Gastrocnemius medialis (tissue), 4 donors: ENCODE measurements at regions of chr6 and their contacts with region 1.

Region 1: GRCh38 chr6:137707590-137708360 is 159.3 kb upstream of the TNFAIP3 start:
- DNase-seq: peak; percentile 45 to 69
- ATAC-seq: peak; percentile 81 to 89
- H3K4me3 ChIP-seq: peak overlapping the region in 1 of 4 donors; percentile 2
- H3K27ac ChIP-seq: no peak overlapping the region
- H3K4me1 ChIP-seq: peaks cover 9 to 11% of the 10 kb centered on the region in 2 donors
- H3K27me3 ChIP-seq: no peaks in the 10 kb centered on the region
- CTCF ChIP-seq: peak; percentile 57 to 79 (median 71)
- POLR2A ChIP-seq: no peak

Region 2: GRCh38 chr6:137754366-137754765 is 46.6 kb after region 1 on chr6:
- in situ Hi-C with region 1: no loop called
- intact Hi-C with region 1: loop called (anchors 5 kb)
- DNase-seq: no peak
- ATAC-seq: no peak
- H3K4me3 ChIP-seq: no peak overlapping the region
- H3K27ac ChIP-seq: no peak overlapping the region
- H3K4me1 ChIP-seq: peaks cover 30 to 35% of the 10 kb centered on the region in 2 donors
- H3K27me3 ChIP-seq: no peaks in the 10 kb centered on the region
- CTCF ChIP-seq: no peak
- POLR2A ChIP-seq: no peak

Region 3: GRCh38 chr6:137866914-137867684 is 159.3 kb after region 1 on chr6 and contains the start of gene TNFAIP3:
- in situ Hi-C with region 1: loop called in 3 of 4 experiments (anchors 5 to 10 kb)
- intact Hi-C with region 1: loop called (anchors 1 kb)
- DNase-seq: peak; percentile 86 to 91
- ATAC-seq: peak; percentile 89 to 90
- H3K4me3 ChIP-seq: peak within 1 kb of the TSS; percentile 67 to 96 (median 86)
- H3K27ac ChIP-seq: peak within 1 kb of the TSS; percentile 85 to 88 (median 86)
- H3K4me1 ChIP-seq: peaks cover 20 to 36% of the 10 kb centered on the region in 2 donors
- H3K27me3 ChIP-seq: no peaks in the 10 kb centered on the region
- CTCF ChIP-seq: peak; percentile 71 to 97 (median 92)
- POLR2A ChIP-seq: peak; percentile 51 to 79
- total RNA-seq, gene TNFAIP3: 2.6 to 7.1 (median 4.7) TPM

Region 4: GRCh38 chr6:137878486-137879285 is 170.9 kb after region 1 on chr6:
- in situ Hi-C with region 1: loop called in 1 of 4 experiments (anchors 5 kb)
- intact Hi-C with region 1: no loop called
- DNase-seq: peak; percentile 15 to 51
- ATAC-seq: peak; percentile 23 to 48
- H3K4me3 ChIP-seq: no peak overlapping the region
- H3K27ac ChIP-seq: peak overlapping the region in 3 of 4 donors; percentile 5 to 28 (median 7)
- H3K4me1 ChIP-seq: peaks cover 4% of the 10 kb centered on the region in 2 donors
- H3K27me3 ChIP-seq: no peaks in the 10 kb centered on the region
- CTCF ChIP-seq: no peak
- POLR2A ChIP-seq: no peak

Region 5: GRCh38 chr6:137944793-137945498 is 237.2 kb after region 1 on chr6:
- in situ Hi-C with region 1: loop called (anchors 5 to 10 kb)
- intact Hi-C with region 1: loop called (anchors 1 kb)
- DNase-seq: no peak
- ATAC-seq: peak; percentile 89 to 93
- H3K4me3 ChIP-seq: no peak overlapping the region
- H3K27ac ChIP-seq: no peak overlapping the region
- H3K4me1 ChIP-seq: no peaks in the 10 kb centered on the region
- H3K27me3 ChIP-seq: no peaks in the 10 kb centered on the region
- CTCF ChIP-seq: peak; percentile 47 to 79 (median 69)
- POLR2A ChIP-seq: no peak

Region 6: GRCh38 chr6:138109042-138109997 is 401.5 kb after region 1 on chr6:
- in situ Hi-C with region 1: loop called in 2 of 4 experiments (anchors 10 to 25 kb)
- intact Hi-C with region 1: loop called (anchors 5 kb)
- DNase-seq: peak in 1 of 2 donors; percentile 40
- ATAC-seq: no peak
- H3K4me3 ChIP-seq: no peak overlapping the region
- H3K27ac ChIP-seq: no peak overlapping the region
- H3K4me1 ChIP-seq: peaks cover 0 to 3% of the 10 kb centered on the region in 2 donors
- H3K27me3 ChIP-seq: peaks cover 18 to 38% (median 27%) of the 10 kb centered on the region in 3 donors
- CTCF ChIP-seq: peak; percentile 76 to 97 (median 85)
- POLR2A ChIP-seq: no peak